T-cell (primary cell): ENCODE measurements at regions of chr2 and their contacts with region 1.

Region 1: GRCh38 chr2:60608679-60609078 is 55.2 kb upstream of the BCL11A start:
- DNase-seq: no peak
- ATAC-seq: no peak
- H3K4me3 ChIP-seq: no peak overlapping the region
- H3K4me3 Mint-ChIP-seq: no peak overlapping the region
- H3K27ac ChIP-seq: no peak overlapping the region
- H3K27ac Mint-ChIP-seq: no peak overlapping the region
- H3K4me1 ChIP-seq: no peaks in the 10 kb centered on the region
- H3K4me1 Mint-ChIP-seq: no peaks in the 10 kb centered on the region
- H3K27me3 ChIP-seq: peaks cover 0 to 7% of the 10 kb centered on the region in 2 experiments
- H3K27me3 Mint-ChIP-seq: peaks cover 12 to 28% of the 10 kb centered on the region in 2 donors

Region 2: GRCh38 chr2:59449269-59449668 is 1159.4 kb before region 1 on chr2:
- CTCF ChIA-PET with region 1: interaction called in 1 of 2 experiments, 10 read pairs
- POLR2A ChIA-PET with region 1: no interaction called
- DNase-seq: peak in 1 of 35 experiments; percentile 17
- ATAC-seq: no peak
- H3K4me3 ChIP-seq: no peak overlapping the region
- H3K4me3 Mint-ChIP-seq: no peak overlapping the region
- H3K27ac ChIP-seq: no peak overlapping the region
- H3K27ac Mint-ChIP-seq: no peak overlapping the region
- H3K4me1 ChIP-seq: no peaks in the 10 kb centered on the region
- H3K4me1 Mint-ChIP-seq: no peaks in the 10 kb centered on the region
- H3K27me3 ChIP-seq: no peaks in the 10 kb centered on the region
- H3K27me3 Mint-ChIP-seq: no peaks in the 10 kb centered on the region

Region 3: GRCh38 chr2:60544062-60544461 is 64.6 kb before region 1 on chr2:
- CTCF ChIA-PET with region 1: no interaction called
- POLR2A ChIA-PET with region 1: interaction called in 1 of 2 experiments, 14 read pairs
- DNase-seq: no peak
- ATAC-seq: no peak
- H3K4me3 ChIP-seq: no peak overlapping the region
- H3K4me3 Mint-ChIP-seq: no peak overlapping the region
- H3K27ac ChIP-seq: no peak overlapping the region
- H3K27ac Mint-ChIP-seq: no peak overlapping the region
- H3K4me1 ChIP-seq: peaks cover 6 to 60% of the 10 kb centered on the region in 2 experiments
- H3K4me1 Mint-ChIP-seq: peaks cover 5 to 13% (median 7%) of the 10 kb centered on the region in 3 donors
- H3K27me3 ChIP-seq: peaks cover 0 to 17% of the 10 kb centered on the region in 2 experiments
- H3K27me3 Mint-ChIP-seq: peaks cover 42 to 60% of the 10 kb centered on the region in 2 donors